ENCODE measurements at regions of chr4 and their contacts with region 1.

Region 1: DNA sequence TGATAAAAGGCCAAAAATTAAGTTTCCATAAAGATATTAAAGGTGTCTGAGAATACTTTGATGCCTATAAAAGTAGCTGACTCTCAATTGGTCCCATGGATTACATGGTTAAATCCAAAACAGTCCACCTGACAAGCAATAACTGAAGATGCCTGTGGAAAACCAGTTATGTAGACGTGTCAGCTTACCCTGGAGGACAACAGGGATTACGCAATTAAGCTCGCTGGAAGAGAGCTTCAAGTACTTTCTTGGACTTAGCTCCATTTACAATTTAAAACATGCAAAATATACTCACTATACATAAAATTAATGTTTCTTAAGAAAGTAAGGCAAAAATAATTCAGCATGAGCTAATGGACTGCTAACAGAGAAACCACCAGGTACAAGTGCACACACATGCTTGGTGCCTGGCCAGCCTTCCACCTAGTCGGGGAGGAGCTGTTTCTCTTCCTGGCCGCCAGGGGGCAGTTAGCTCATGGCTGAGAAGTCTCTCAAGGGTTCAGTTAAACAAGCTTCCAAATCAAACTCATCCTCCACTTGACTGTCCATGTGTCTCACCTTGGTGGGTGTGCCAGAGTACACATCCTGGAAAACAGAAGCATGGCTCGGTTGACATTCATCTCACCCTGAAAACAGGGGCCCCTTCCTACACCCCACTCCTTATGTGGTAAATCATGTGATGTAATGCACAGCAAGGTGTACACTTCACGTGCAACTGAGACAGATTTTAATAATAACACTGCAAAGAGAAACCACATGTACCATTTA is 9.2 kb upstream of the FAM53A start:
- DNase-seq: peak; percentile 79 to 88
- H3K4me3 ChIP-seq: no peak overlapping the region
- H3K4me3 Mint-ChIP-seq: no peak overlapping the region
- H3K27ac Mint-ChIP-seq: no peak overlapping the region
- H3K4me1 ChIP-seq: no peaks in the 10 kb centered on the region
- H3K4me1 Mint-ChIP-seq: no peaks in the 10 kb centered on the region
- H3K27me3 ChIP-seq: no peaks in the 10 kb centered on the region
- H3K27me3 Mint-ChIP-seq: no peaks in the 10 kb centered on the region
- CTCF ChIP-seq: peak; percentile 82 to 87

Region 2: DNA sequence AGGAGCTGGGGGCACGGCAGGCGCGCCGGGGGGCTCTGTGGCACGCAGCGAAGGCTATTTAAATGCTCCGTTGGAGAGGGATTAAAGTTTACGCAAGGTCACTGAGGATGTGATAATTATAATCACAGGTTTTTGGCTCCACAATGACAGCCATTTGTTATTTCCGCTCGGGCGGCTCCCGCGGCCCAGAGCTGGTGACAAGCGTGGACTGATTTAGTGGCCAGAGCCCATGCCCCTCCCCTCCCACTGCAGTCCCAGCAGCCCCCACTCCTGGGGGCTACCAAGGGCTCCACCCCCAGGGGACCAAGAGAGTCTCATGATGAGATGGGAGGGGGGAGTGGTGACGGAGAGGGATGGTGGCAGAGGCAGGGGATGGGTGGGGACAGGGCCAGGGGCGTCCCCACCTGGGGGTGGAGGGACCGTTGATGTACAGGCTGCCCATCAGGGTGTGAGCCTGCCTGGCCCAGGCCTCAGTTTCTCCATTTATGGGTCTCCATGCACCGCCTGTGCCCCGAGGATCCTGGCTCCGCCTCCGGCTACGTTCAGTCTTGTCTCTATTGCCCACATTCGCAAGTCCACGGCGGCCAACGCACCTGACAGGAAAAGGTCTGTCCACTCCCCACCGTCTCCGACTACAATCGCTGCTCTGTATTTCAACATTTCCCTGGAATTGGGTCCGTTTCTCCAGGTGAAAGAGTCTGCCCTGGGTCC is 191.0 kb before region 1 on chr4:
- CTCF ChIA-PET with region 1: no interaction called
- POLR2A ChIA-PET with region 1: no interaction called
- intact Hi-C with region 1: no loop called
- DNase-seq: peak in 1 of 2 experiments; percentile 14
- H3K4me3 ChIP-seq: no peak overlapping the region
- H3K4me3 Mint-ChIP-seq: no peak overlapping the region
- H3K27ac Mint-ChIP-seq: no peak overlapping the region
- H3K4me1 ChIP-seq: no peaks in the 10 kb centered on the region
- H3K4me1 Mint-ChIP-seq: no peaks in the 10 kb centered on the region
- H3K27me3 ChIP-seq: no peaks in the 10 kb centered on the region; the same call in 1 of the 2 replicates
- H3K27me3 Mint-ChIP-seq: peaks cover 9% of the 10 kb centered on the region
- CTCF ChIP-seq: no peak

Region 3: GRCh38 chr4:1721004-1721665 is 27.8 kb after region 1 on chr4 and contains the starts of genes TACC3 and TMEM129:
- CTCF ChIA-PET with region 1: interaction called, 16 read pairs
- POLR2A ChIA-PET with region 1: interaction called, 11 read pairs
- intact Hi-C with region 1: loop called (anchors 1 kb)
- DNase-seq: peak; percentile 98
- H3K4me3 ChIP-seq: peak within 1 kb of the TSS; percentile 95
- H3K4me3 Mint-ChIP-seq: peak within 1 kb of the TSS; percentile 99
- H3K27ac Mint-ChIP-seq: peak within 1 kb of the TSS; percentile 94
- H3K4me1 ChIP-seq: peaks cover 6% of the 10 kb centered on the region; the same call in 1 of the 2 replicates
- H3K4me1 Mint-ChIP-seq: peaks cover 11% of the 10 kb centered on the region
- H3K27me3 ChIP-seq: no peaks in the 10 kb centered on the region
- H3K27me3 Mint-ChIP-seq: no peaks in the 10 kb centered on the region
- CTCF ChIP-seq: no peak
- total RNA-seq, gene TACC3: 104 and 106 TPM in 2 replicates
- total RNA-seq, gene TMEM129: 36.5 and 39.0 TPM in 2 replicates

Measured in Caco-2 (cell line).